Prostate gland (tissue), 2 donors: ENCODE measurements at regions of chrX and their contacts with region 1.

Region 1: GRCh38 chrX:19343535-19344408 is at the start of gene PDHA1:
- DNase-seq: peak; percentile 88
- H3K4me3 ChIP-seq: peak within 1 kb of the TSS; percentile 61 to 64
- H3K27ac ChIP-seq: peak within 1 kb of the TSS; percentile 88 to 89
- H3K4me1 ChIP-seq: no peaks in the 10 kb centered on the region
- H3K27me3 ChIP-seq: no peaks in the 10 kb centered on the region
- CTCF ChIP-seq: peak in 1 of 4 experiments; percentile 16
- POLR2A ChIP-seq: peak; percentile 53
- total RNA-seq, gene PDHA1: 30.7 to 53.1 TPM

Region 2: GRCh38 chrX:18984381-18985185 is 359.2 kb before region 1 on chrX:
- intact Hi-C with region 1: loop called (anchors 10 kb)
- DNase-seq: peak; percentile 76
- H3K4me3 ChIP-seq: peak overlapping the region; percentile 56 to 57
- H3K27ac ChIP-seq: peak overlapping the region; percentile 85 to 89
- H3K4me1 ChIP-seq: no peaks in the 10 kb centered on the region
- H3K27me3 ChIP-seq: no peaks in the 10 kb centered on the region
- CTCF ChIP-seq: peak; percentile 23 to 68 (median 44)
- POLR2A ChIP-seq: no peak